ENCODE measurements at regions of chr11 and their contacts with region 1.

Region 1: GRCh38 chr11:6489306-6489705 is 7.8 kb upstream of the DNHD1 start:
- DNase-seq: no peak
- H3K4me3 ChIP-seq: no peak overlapping the region
- H3K27ac ChIP-seq: no peak overlapping the region
- H3K4me1 ChIP-seq: no peaks in the 10 kb centered on the region
- H3K27me3 ChIP-seq: no peaks in the 10 kb centered on the region

Region 2: DNA sequence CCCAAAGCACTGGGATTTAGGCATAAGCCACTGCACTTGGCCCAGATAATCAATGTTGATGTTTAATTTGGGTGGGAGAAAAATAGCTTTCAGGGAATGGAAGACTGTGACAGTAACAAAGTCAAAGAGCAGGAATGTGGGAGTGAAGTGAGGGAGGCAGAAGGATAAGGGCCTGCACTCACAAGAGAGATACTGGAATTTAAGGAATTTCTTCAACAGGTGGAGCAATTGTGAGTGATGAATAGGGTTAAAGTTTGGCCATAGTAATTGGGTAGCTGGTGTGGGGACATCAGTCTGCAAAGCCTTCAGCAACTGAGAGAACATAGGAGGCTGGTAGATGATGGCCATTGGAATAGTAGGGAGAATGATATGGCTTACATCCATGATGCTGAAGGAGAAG is 61.8 kb before region 1 on chr11:
- CTCF ChIA-PET with region 1: no interaction called
- POLR2A ChIA-PET with region 1: no interaction called
- DNase-seq: no peak
- H3K4me3 ChIP-seq: no peak overlapping the region
- H3K27ac ChIP-seq: no peak overlapping the region
- H3K4me1 ChIP-seq: no peaks in the 10 kb centered on the region
- H3K27me3 ChIP-seq: peaks cover 0 to 6% (median 0%) of the 10 kb centered on the region in 5 experiments

Region 3: GRCh38 chr11:6505577-6506240 is 16.4 kb after region 1 on chr11:
- CTCF ChIA-PET with region 1: interaction called, 19 read pairs
- POLR2A ChIA-PET with region 1: no interaction called
- DNase-seq: peak; percentile 47 to 67 (median 65)
- H3K4me3 ChIP-seq: no peak overlapping the region
- H3K27ac ChIP-seq: no peak overlapping the region
- H3K4me1 ChIP-seq: no peaks in the 10 kb centered on the region
- H3K27me3 ChIP-seq: no peaks in the 10 kb centered on the region

Measured in common myeloid progenitor, CD34-positive (primary cell).